ENCODE measurements at regions of chr9 and their contacts with region 1.

Region 1: DNA sequence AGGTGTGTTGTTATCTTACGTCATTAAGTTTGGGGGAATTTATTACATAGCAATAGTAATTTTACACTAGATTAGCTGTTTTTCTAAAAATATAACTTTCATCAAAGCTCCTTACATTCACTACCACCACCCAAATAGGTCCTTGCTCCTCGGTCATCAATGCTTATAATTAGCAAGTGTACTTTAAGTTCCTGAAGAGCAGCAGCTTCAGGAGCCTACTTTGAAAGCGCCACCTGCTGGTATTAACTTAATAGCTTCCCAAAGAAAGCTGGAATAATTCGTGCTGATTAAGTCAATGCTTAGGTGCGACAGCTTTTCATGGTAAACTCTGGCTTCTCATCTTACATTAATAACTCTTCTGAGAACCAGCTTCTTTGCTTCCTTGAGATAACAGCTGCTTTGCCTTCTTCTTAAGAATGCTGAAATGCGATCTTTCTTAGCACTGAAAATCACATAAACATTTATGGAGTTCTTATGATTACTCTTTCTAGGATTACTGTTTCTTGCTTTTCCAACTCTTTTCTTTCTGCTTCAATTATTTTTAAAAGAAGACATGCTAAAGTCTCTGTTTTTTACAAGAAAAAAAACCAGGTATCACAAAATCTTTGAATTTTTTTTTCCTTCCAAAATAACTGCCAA is 10.0 kb upstream of the C5 start:
- DNase-seq: no peak
- H3K4me3 ChIP-seq: no peak overlapping the region
- H3K27ac ChIP-seq: no peak overlapping the region
- H3K4me1 ChIP-seq: no peaks in the 10 kb centered on the region
- H3K27me3 ChIP-seq: no peaks in the 10 kb centered on the region
- CTCF ChIP-seq: peak; percentile 54 to 75 (median 73)

Region 2: GRCh38 chr9:120714088-120714845 is 345.9 kb before region 1 on chr9 and contains the start of gene MEGF9:
- intact Hi-C with region 1: no loop called
- DNase-seq: peak; percentile 95 to 99
- H3K4me3 ChIP-seq: peak within 1 kb of the TSS; percentile 70 to 82
- H3K27ac ChIP-seq: peak within 1 kb of the TSS; percentile 64 to 73
- H3K4me1 ChIP-seq: peaks cover 4 to 7% of the 10 kb centered on the region in 2 donors
- H3K27me3 ChIP-seq: no peaks in the 10 kb centered on the region
- CTCF ChIP-seq: peak in 1 of 3 experiments; percentile 9
- total RNA-seq, gene MEGF9: 14.3 TPM

Region 3: GRCh38 chr9:120755827-120756434 is 304.2 kb before region 1 on chr9:
- intact Hi-C with region 1: loop called (anchors 1 kb)
- DNase-seq: peak in 1 of 2 donors; percentile 76
- H3K4me3 ChIP-seq: no peak overlapping the region
- H3K27ac ChIP-seq: peak overlapping the region in 1 of 2 donors; percentile 44
- H3K4me1 ChIP-seq: peaks cover 0 to 2% of the 10 kb centered on the region in 2 donors
- H3K27me3 ChIP-seq: no peaks in the 10 kb centered on the region
- CTCF ChIP-seq: peak; percentile 82 to 86 (median 86)

Region 4: GRCh38 chr9:121286973-121287741 is 227.0 kb after region 1 on chr9:
- intact Hi-C with region 1: no loop called
- DNase-seq: peak; percentile 56 to 95
- H3K4me3 ChIP-seq: peak overlapping the region; percentile 24 to 38
- H3K27ac ChIP-seq: peak overlapping the region; percentile 98 to 99
- H3K4me1 ChIP-seq: peaks cover 66 to 91% of the 10 kb centered on the region in 2 donors
- H3K27me3 ChIP-seq: no peaks in the 10 kb centered on the region
- CTCF ChIP-seq: peak in 2 of 3 experiments; percentile 28 to 29

Measured in ascending aorta (tissue), 2 donors.